ENCODE measurements at regions of chr21 and their contacts with region 1.

Region 1: DNA sequence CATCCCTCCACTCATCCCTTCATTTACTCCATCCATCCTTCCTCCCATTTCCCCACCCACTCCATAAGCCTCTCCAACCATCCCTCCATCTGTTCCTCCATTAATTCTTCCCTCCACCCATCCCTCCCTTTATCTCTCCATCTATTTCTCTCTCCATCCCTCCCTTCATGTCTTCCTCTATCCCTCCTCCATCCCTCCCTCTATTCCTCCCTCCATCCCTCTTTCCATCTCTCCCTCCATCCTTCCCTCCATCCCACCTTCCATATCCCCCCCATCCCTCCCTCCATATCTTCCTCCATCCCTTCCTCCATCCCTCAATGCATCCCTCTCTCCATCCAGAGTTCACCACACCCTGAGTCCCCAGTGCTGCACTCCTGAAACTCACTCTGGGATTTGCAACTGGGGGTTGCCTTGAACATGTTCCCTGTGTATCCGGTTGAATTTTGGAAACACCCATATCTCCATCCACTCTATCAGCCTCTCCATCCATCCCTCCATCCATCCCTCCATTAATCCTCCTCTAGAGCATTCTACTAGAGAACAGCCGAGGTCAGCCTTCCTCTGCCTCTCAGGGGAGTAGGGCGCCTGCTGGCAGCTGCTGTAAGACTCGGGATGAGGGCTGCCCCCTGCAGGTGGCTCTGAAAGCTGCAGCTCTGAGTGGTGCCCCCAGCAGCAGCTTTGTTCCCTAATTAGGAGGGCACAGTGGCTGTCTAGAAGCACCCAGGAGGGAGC is 39.4 kb downstream of the ABCG1 start:
- DNase-seq: peak; percentile 87
- H3K4me3 Mint-ChIP-seq: no peak overlapping the region
- H3K27ac Mint-ChIP-seq: no peak overlapping the region
- H3K4me1 Mint-ChIP-seq: peaks cover 7% of the 10 kb centered on the region
- H3K27me3 Mint-ChIP-seq: no peaks in the 10 kb centered on the region

Region 2: GRCh38 chr21:41992576-41992975 is 265.7 kb before region 1 on chr21:
- CTCF ChIA-PET with region 1: no interaction called
- POLR2A ChIA-PET with region 1: no interaction called
- intact Hi-C with region 1: no loop called
- DNase-seq: no peak
- H3K4me3 Mint-ChIP-seq: no peak overlapping the region
- H3K27ac Mint-ChIP-seq: no peak overlapping the region
- H3K4me1 Mint-ChIP-seq: peaks cover 2% of the 10 kb centered on the region
- H3K27me3 Mint-ChIP-seq: no peaks in the 10 kb centered on the region

Region 3: GRCh38 chr21:42151091-42151947 is 107.0 kb before region 1 on chr21:
- CTCF ChIA-PET with region 1: interaction called, 204 read pairs
- POLR2A ChIA-PET with region 1: interaction called, 6 read pairs
- intact Hi-C with region 1: no loop called
- DNase-seq: no peak
- H3K4me3 Mint-ChIP-seq: no peak overlapping the region
- H3K27ac Mint-ChIP-seq: no peak overlapping the region
- H3K4me1 Mint-ChIP-seq: no peaks in the 10 kb centered on the region
- H3K27me3 Mint-ChIP-seq: no peaks in the 10 kb centered on the region

Region 4: GRCh38 chr21:42171091-42172053 is 86.9 kb before region 1 on chr21:
- CTCF ChIA-PET with region 1: interaction called, 139 read pairs
- POLR2A ChIA-PET with region 1: no interaction called
- intact Hi-C with region 1: no loop called
- DNase-seq: no peak
- H3K4me3 Mint-ChIP-seq: no peak overlapping the region
- H3K27ac Mint-ChIP-seq: no peak overlapping the region
- H3K4me1 Mint-ChIP-seq: peaks cover 2% of the 10 kb centered on the region
- H3K27me3 Mint-ChIP-seq: no peaks in the 10 kb centered on the region

Region 5: GRCh38 chr21:42193131-42193671 is 65.1 kb before region 1 on chr21:
- CTCF ChIA-PET with region 1: interaction called, 12 read pairs
- POLR2A ChIA-PET with region 1: no interaction called
- intact Hi-C with region 1: no loop called
- DNase-seq: peak; percentile 86
- H3K4me3 Mint-ChIP-seq: peak overlapping the region; percentile 15
- H3K27ac Mint-ChIP-seq: peak overlapping the region; percentile 38
- H3K4me1 Mint-ChIP-seq: peaks cover 46% of the 10 kb centered on the region
- H3K27me3 Mint-ChIP-seq: no peaks in the 10 kb centered on the region

Region 6: DNA sequence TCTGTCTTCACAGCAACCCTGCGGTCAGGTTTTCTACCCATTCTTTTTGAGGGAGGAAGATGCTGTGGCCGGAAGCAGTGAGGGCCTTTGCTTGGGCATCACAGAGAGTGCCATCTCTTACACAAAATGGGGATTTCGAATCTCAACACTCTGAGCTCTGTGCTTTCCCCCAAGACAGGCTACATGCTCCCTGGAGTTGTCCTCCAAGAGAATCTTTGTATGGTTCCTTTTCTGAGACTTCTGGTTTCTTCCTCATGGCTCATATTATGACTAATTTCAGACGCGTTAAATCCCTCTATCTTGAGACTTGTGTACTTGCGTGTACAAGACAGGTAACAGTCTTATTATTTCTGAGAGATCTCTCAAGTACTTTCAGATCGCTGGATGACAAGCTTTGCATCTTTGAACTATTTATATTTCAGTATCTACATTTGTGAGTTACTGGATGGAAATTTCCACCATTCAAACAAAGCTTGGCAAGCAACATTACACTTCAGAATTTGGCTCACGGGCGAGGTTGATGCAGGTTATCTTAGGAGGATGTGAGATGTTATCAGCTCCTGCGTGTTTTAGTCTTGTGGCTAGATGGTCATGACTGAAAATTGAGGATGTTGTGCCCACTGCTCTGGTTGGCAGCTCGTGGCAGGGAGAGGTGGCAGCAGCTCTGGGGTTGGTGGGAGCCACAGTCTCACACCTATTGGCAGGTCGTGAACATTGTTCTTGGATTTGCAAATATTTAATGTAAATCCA is 20.0 kb before region 1 on chr21:
- CTCF ChIA-PET with region 1: interaction called, 34 read pairs
- POLR2A ChIA-PET with region 1: interaction called, 4 read pairs
- intact Hi-C with region 1: no loop called
- DNase-seq: peak; percentile 67
- H3K4me3 Mint-ChIP-seq: peak overlapping the region; percentile 42
- H3K27ac Mint-ChIP-seq: peak overlapping the region; percentile 80
- H3K4me1 Mint-ChIP-seq: peaks cover 61% of the 10 kb centered on the region
- H3K27me3 Mint-ChIP-seq: no peaks in the 10 kb centered on the region